Transverse colon (tissue), 4 donors: ENCODE measurements at regions of chr11 and their contacts with region 1.

Region 1: GRCh38 chr11:57249384-57250319 is 12.6 kb upstream of the APLNR start:
- DNase-seq: peak; percentile 75
- H3K4me3 ChIP-seq: no peak overlapping the region
- H3K27ac ChIP-seq: peak overlapping the region in 3 of 4 donors; percentile 22 to 46 (median 26)
- H3K4me1 ChIP-seq: peaks cover 2 to 5% (median 4%) of the 10 kb centered on the region in 4 donors
- H3K27me3 ChIP-seq: no peaks in the 10 kb centered on the region
- CTCF ChIP-seq: peak; percentile 80 to 86 (median 82)
- EP300 ChIP-seq: no peak
- POLR2A ChIP-seq: no peak

Region 2: DNA sequence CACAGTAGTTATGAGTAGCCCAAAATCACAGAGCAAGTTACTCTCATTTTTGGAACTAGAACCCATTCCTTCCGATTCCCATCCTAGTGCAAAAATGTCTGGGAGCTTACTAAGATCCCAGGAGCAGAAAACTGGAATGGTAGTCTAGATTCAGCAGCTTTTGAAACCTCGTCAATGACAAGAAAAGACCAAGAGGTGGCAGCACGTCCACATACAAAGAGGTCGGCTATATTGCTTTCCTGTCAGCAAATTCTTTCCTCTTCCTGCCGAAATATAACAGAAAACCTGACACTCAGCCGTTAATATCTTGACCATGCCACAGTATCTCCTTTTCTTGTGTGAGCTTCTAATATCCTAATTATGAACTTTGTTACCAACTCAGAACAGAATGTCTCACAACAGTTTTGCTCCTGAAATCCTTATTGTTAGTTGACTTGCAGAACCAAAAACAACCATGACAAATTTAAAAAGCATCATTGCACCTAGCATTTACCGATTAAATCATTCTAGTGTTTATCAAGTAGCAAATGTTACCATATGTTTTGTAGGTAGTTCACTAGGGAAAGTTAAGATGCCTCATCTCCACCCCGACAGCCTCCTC is 408.3 kb before region 1 on chr11:
- in situ Hi-C with region 1: loop called (anchors 5 to 25 kb)
- intact Hi-C with region 1: loop called (anchors 10 kb)
- DNase-seq: peak; percentile 57
- H3K4me3 ChIP-seq: no peak overlapping the region
- H3K27ac ChIP-seq: no peak overlapping the region
- H3K4me1 ChIP-seq: peaks cover 0 to 5% (median 3%) of the 10 kb centered on the region in 4 donors
- H3K27me3 ChIP-seq: no peaks in the 10 kb centered on the region
- CTCF ChIP-seq: peak; percentile 54 to 74 (median 68)
- EP300 ChIP-seq: no peak
- POLR2A ChIP-seq: no peak

Region 3: GRCh38 chr11:57116654-57117053 is 133.0 kb before region 1 on chr11:
- in situ Hi-C with region 1: loop called in 2 of 4 experiments (anchors 10 kb)
- intact Hi-C with region 1: loop called (anchors 5 kb)
- DNase-seq: peak; percentile 38
- H3K4me3 ChIP-seq: no peak overlapping the region
- H3K27ac ChIP-seq: no peak overlapping the region
- H3K4me1 ChIP-seq: no peaks in the 10 kb centered on the region
- H3K27me3 ChIP-seq: no peaks in the 10 kb centered on the region
- CTCF ChIP-seq: peak; percentile 28 to 49 (median 39)
- EP300 ChIP-seq: no peak
- POLR2A ChIP-seq: no peak

Region 4: GRCh38 chr11:57124917-57125316 is 124.7 kb before region 1 on chr11:
- in situ Hi-C with region 1: loop called in 3 of 4 experiments (anchors 5 to 10 kb)
- intact Hi-C with region 1: no loop called
- DNase-seq: no peak
- H3K4me3 ChIP-seq: no peak overlapping the region
- H3K27ac ChIP-seq: no peak overlapping the region
- H3K4me1 ChIP-seq: no peaks in the 10 kb centered on the region
- H3K27me3 ChIP-seq: no peaks in the 10 kb centered on the region
- CTCF ChIP-seq: no peak
- EP300 ChIP-seq: no peak
- POLR2A ChIP-seq: no peak

Region 5: DNA sequence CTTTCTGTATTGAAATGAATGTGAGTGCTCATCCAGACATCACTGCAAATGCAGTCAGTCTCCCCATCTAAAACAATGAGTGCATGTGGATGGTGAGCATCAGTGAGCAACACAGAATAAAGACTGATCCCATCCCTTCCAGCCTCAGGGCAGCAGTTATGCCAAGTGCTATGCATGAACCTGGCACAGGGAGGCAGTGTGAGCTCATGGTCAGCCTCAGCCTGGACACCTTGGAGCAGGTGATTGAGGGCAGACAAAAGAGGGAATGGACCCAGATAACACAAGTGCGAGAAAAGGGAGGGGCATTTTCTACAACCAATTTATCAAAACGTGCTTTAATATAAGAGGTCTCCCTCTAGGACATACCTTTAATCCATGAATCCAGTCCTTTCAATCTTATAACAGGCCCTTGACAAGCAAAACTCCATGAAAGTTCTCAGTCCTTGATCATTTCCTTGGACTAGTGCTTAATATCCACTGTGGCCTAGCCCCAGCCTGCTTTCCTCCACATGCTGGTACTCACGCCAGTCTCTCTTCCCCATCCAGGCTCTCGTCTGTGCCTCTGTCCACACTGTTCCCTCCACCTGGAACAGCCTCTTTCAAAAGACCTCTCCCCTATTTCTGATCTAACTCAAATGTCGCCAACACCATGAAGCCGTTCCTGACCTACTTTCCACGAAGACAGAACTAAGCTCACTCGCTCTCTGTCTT is 118.4 kb before region 1 on chr11:
- in situ Hi-C with region 1: loop called in 3 of 4 experiments (anchors 5 to 10 kb)
- intact Hi-C with region 1: no loop called
- DNase-seq: peak; percentile 25
- H3K4me3 ChIP-seq: no peak overlapping the region
- H3K27ac ChIP-seq: no peak overlapping the region
- H3K4me1 ChIP-seq: no peaks in the 10 kb centered on the region
- H3K27me3 ChIP-seq: no peaks in the 10 kb centered on the region
- CTCF ChIP-seq: peak; percentile 33 to 52 (median 48)
- EP300 ChIP-seq: no peak
- POLR2A ChIP-seq: no peak

Region 6: GRCh38 chr11:57406337-57406904 is 156.8 kb after region 1 on chr11:
- in situ Hi-C with region 1: no loop called
- intact Hi-C with region 1: no loop called
- DNase-seq: no peak
- H3K4me3 ChIP-seq: no peak overlapping the region
- H3K27ac ChIP-seq: no peak overlapping the region
- H3K4me1 ChIP-seq: peaks cover 0 to 7% (median 0%) of the 10 kb centered on the region in 4 donors
- H3K27me3 ChIP-seq: no peaks in the 10 kb centered on the region
- CTCF ChIP-seq: no peak
- EP300 ChIP-seq: no peak
- POLR2A ChIP-seq: no peak

Region 7: DNA sequence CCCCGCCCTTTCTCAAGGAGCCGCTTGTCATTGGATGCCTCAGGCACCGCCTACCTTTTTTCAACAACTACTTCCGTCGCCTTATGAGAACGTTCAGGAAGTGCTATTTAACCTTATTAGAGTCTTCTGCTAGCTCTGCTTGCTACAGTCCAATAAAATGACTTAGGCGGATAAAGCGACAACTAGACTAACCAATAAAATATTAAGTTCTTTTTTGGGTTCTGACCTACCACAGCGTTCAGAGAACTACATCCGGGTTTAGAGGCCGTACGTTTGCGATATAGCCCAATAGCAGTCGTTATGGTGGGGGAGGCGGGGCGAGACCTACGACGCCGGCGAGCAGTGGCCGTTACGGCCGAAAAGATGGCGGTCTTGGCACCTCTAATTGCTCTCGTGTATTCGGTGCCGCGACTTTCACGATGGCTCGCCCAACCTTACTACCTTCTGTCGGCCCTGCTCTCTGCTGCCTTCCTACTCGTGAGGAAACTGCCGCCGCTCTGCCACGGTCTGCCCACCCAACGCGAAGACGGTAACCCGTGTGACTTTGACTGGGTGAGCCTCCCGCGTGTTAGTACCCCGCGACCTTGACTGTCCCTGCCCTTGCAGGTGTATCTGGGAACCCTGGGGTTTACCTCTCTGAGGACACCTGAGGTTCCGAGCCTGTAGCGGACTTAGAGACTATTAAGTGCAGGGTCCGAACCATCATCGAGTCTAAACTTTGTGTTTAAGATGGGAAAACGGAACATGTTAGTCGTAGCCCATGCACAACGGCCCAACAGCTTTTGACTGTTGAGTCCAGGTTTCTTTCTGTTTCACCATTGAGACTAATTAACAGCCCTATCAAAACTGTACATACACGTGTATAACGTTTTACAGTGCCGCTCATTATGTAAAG is 462.9 kb after region 1 on chr11 and contains the start of gene TMX2:
- in situ Hi-C with region 1: no loop called
- intact Hi-C with region 1: no loop called
- DNase-seq: peak; percentile 94
- H3K4me3 ChIP-seq: peak within 1 kb of the TSS; percentile 82 to 97 (median 90)
- H3K27ac ChIP-seq: peak within 1 kb of the TSS; percentile 89 to 97 (median 94)
- H3K4me1 ChIP-seq: peaks cover 22 to 39% (median 29%) of the 10 kb centered on the region in 4 donors
- H3K27me3 ChIP-seq: no peaks in the 10 kb centered on the region
- CTCF ChIP-seq: no peak
- EP300 ChIP-seq: no peak
- POLR2A ChIP-seq: peak; percentile 69
- total RNA-seq, gene TMX2: 12.3 to 86.7 (median 49.0) TPM